MCF 10A (cell line): ENCODE measurements at regions of chr7 and their contacts with region 1.

Region 1: DNA sequence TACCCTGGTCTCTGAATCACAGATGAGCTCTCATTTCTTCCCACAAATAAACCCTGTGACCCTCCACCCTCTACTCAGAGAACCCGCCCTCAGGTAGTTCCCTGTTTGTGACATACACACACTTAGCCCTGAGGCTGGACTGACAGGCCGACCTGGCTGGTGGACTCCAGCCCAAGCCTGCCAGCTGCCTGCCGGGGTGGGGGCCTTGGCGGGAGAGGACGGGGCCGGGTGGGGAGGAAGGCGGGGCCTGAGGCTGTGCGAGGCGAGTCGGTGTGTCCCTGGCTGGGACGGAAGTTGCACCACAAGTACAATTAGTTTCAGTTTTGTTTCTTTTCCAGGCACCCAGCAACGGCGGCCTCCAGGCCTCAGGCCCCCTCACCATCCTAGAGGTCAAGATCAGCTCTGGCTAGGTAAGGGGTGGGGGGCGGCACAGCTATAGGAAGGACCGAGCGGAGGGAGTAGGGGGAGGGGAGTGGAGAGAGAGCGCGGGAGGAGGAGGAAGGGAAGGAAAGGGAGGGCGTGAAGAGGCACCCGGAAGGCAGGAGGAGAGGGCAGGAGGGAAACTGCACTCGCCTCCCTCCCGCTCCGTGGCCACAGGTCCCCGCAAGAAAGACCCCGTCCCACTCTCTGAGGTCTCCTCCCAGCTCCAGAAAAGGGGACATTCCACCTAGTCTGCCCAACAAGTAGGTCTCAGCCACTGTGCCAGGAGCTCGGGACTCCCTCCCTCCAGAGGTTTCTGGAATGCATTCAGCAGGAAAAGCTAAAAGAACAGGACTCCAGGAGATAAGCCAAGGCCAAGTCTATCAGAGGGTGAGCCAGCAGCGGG is at the start of gene TRIM56:
- DNase-seq: peak; percentile 90
- H3K4me3 Mint-ChIP-seq: peak within 1 kb of the TSS; percentile 94
- H3K27ac Mint-ChIP-seq: peak within 1 kb of the TSS; percentile 98
- H3K4me1 Mint-ChIP-seq: peaks cover 13% of the 10 kb centered on the region
- H3K27me3 Mint-ChIP-seq: no peaks in the 10 kb centered on the region
- CTCF ChIP-seq: no peak
- total RNA-seq, gene TRIM56: 29.6 and 36.8 TPM in 2 replicates

Region 2: DNA sequence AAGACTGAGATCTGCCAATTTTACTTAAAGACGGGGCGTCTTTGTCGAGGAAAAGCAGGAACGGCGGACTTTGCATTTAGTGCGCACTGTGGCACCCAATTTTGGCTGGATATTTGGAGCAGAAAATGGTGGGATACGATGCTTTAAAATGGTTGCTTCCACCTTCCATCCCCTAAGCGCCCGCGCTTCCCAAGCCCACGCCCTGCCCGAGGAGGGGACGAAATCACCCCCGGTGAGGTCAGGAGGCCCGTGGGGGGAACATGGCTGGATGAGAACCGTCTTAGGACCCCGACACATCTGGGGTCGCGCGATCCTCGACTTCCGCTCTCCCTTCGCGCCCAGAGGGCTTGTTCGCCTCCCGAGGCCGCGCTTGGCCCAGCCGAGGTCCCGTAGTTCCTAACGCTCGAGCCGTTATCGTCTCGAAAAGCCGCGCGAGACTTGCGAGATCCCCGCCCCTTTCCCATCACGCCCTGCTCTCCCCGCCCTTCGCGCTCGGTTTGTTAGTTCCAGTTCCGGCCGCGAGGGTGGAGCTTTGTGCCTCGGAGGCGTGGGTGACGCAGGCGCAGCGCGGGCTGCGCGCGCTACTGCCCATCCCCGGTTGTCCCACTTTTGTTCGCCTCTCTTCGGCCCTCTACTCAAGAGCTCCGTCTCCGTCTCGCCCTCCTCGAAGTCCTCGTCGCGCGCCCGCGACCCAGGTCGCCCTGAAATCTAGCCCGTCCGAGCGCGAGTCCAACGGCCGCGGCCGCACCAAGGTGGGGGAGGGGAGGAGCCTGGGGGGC is 210.6 kb before region 1 on chr7 and contains the start of gene SRRT:
- CTCF ChIA-PET with region 1: no interaction called
- POLR2A ChIA-PET with region 1: interaction called, 11 read pairs
- intact Hi-C with region 1: no loop called
- DNase-seq: peak; percentile 99
- H3K4me3 Mint-ChIP-seq: peak within 1 kb of the TSS; percentile 97
- H3K27ac Mint-ChIP-seq: peak within 1 kb of the TSS; percentile 98
- H3K4me1 Mint-ChIP-seq: peaks cover 30% of the 10 kb centered on the region
- H3K27me3 Mint-ChIP-seq: no peaks in the 10 kb centered on the region
- CTCF ChIP-seq: no peak
- total RNA-seq, gene SRRT: 111 and 142 TPM in 2 replicates

Region 3: DNA sequence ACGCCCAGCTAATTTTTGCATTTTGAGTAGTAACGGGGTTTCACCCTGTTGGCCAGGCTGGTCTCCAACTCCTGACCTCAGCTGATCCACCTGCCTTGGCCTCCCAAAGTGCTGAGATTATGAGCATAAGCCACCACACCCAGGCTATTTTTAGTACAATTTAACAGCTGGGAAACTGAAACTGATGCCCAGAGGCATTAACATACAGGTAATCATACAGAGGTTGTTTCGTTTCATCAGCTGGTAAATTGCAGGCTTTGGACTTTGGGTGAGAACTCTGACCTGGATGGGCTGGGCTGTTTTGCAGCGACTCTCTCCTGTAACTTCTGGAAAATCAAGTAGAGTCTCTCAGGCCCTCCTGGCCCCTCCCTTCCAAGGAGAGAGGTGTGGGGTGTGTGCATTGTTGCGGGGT is 183.4 kb before region 1 on chr7:
- CTCF ChIA-PET with region 1: no interaction called
- POLR2A ChIA-PET with region 1: no interaction called
- intact Hi-C with region 1: no loop called
- DNase-seq: no peak
- H3K4me3 Mint-ChIP-seq: no peak overlapping the region
- H3K27ac Mint-ChIP-seq: no peak overlapping the region
- H3K4me1 Mint-ChIP-seq: no peaks in the 10 kb centered on the region
- H3K27me3 Mint-ChIP-seq: peaks cover 21% of the 10 kb centered on the region
- CTCF ChIP-seq: no peak

Region 4: DNA sequence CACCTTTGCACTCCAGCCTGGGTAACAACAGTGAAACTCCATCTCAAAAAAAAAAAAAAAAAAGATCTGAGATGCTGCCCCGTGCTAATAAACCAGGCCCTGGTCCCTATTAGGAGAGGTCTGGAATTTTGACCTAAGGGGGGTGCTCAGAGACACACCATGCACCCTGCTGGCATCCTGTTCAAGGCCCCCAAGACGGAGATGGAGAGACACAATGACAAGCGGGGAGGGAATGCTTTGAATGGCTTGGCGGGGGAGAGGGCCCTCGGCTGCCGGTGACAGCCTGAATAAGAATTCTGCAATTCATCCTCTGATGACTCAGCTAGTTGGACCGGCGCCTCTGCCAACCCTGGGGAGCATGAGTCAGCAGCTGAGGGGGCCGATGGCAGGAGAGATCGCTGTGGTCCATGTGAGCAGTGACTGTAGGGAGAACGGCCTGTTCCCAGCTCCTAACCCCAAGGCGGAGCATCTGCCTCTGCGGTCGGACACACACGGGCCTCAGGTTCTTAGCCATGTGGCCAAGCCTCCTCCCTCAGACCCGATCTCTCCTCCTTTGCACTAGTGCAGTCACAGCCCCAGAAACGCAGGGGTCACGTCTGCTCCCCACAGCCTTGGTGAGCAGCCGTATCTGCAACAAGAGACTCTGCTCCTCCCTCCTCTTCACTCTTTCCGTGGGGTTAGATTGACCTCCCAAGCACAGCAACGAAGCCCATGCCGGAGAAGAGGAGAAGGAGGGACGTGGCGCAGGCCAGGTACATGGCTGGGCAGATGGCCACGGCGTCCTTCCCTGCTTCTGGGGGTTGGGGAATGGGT is 14.8 kb after region 1 on chr7:
- CTCF ChIA-PET with region 1: interaction called, 3 read pairs
- POLR2A ChIA-PET with region 1: interaction called, 23 read pairs
- intact Hi-C with region 1: no loop called
- DNase-seq: peak; percentile 97
- H3K4me3 Mint-ChIP-seq: peak overlapping the region; percentile 54
- H3K27ac Mint-ChIP-seq: peak overlapping the region; percentile 73
- H3K4me1 Mint-ChIP-seq: peaks cover 29% of the 10 kb centered on the region
- H3K27me3 Mint-ChIP-seq: no peaks in the 10 kb centered on the region
- CTCF ChIP-seq: no peak

Region 5: GRCh38 chr7:101108330-101108857 is 23.0 kb after region 1 on chr7:
- CTCF ChIA-PET with region 1: interaction called, 3 read pairs
- POLR2A ChIA-PET with region 1: interaction called, 22 read pairs
- intact Hi-C with region 1: no loop called
- DNase-seq: peak; percentile 75
- H3K4me3 Mint-ChIP-seq: no peak overlapping the region
- H3K27ac Mint-ChIP-seq: peak overlapping the region; percentile 63
- H3K4me1 Mint-ChIP-seq: peaks cover 31% of the 10 kb centered on the region
- H3K27me3 Mint-ChIP-seq: no peaks in the 10 kb centered on the region
- CTCF ChIP-seq: no peak